ENCODE measurements at regions of chr21 and their contacts with region 1.

Region 1: GRCh38 chr21:16194095-16194787 is 464.5 kb downstream of the USP25 start:
- DNase-seq: peak; percentile 82

Region 2: DNA sequence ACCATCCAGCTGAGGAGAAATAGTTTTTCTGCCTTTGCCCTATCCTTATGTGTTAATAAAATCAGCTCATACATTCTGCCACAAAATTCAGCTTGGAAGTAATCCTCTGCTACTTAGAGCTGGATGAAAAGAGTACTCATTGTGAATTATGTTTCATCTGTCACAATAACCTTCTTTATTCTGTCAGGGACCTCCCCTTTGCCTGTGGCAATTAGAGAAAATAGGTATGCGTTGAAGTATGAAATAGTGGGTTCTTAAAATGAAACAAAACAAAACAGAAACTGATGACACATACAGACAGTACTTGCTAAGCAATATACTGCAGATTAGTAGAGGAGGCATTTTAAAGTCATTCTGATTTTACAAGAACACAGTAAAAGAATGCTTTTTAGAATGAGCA is 114.0 kb after region 1 on chr21:
- intact Hi-C with region 1: loop called in 1 of 2 experiments (anchors 10 kb)
- DNase-seq: no peak

Measured in posterior vena cava (tissue), 2 donors.